SK-N-SH (cell line): ENCODE measurements at regions of chr4 and their contacts with region 1.

Region 1: GRCh38 chr4:30714408-30715027 is 5.7 kb upstream of the PCDH7 start:
- DNase-seq: peak; percentile 63
- H3K4me3 ChIP-seq: no peak overlapping the region
- H3K27ac ChIP-seq: no peak overlapping the region
- H3K4me1 ChIP-seq: peaks cover 0 to 20% of the 10 kb centered on the region in 2 experiments; a peak in 1 of 4 replicates
- H3K27me3 ChIP-seq: peaks cover 20% of the 10 kb centered on the region
- CTCF ChIP-seq: peak; percentile 83
- EP300 ChIP-seq: no peak
- RAD21 ChIP-seq: peak; percentile 66

Region 2: DNA sequence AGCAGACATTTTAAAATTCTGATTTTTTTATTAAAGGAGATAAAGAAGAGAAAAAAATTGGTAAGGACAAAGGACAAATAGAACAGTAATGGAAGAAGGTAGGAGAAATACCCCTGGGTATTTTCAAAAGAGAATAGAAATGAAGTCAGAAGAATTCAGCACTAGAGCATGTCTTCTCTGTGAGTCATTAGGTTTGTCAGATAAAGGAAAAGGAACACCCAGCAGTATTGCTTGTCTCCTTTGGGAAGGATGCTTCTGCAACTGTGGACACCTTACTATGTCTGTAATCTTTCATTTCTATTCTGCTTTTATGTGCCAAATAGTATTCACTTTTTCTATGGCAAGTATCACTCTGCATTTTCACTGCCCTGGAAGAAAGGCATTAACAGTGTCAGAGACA is 18.3 kb before region 1 on chr4:
- CTCF ChIA-PET with region 1: interaction called, 12 read pairs
- POLR2A ChIA-PET with region 1: no interaction called
- DNase-seq: no peak
- H3K4me3 ChIP-seq: no peak overlapping the region
- H3K27ac ChIP-seq: no peak overlapping the region
- H3K4me1 ChIP-seq: no peaks in the 10 kb centered on the region
- H3K27me3 ChIP-seq: no peaks in the 10 kb centered on the region
- CTCF ChIP-seq: no peak
- EP300 ChIP-seq: no peak
- RAD21 ChIP-seq: no peak